G401 (cell line): ENCODE measurements at regions of chr2 and their contacts with region 1.

Region 1: DNA sequence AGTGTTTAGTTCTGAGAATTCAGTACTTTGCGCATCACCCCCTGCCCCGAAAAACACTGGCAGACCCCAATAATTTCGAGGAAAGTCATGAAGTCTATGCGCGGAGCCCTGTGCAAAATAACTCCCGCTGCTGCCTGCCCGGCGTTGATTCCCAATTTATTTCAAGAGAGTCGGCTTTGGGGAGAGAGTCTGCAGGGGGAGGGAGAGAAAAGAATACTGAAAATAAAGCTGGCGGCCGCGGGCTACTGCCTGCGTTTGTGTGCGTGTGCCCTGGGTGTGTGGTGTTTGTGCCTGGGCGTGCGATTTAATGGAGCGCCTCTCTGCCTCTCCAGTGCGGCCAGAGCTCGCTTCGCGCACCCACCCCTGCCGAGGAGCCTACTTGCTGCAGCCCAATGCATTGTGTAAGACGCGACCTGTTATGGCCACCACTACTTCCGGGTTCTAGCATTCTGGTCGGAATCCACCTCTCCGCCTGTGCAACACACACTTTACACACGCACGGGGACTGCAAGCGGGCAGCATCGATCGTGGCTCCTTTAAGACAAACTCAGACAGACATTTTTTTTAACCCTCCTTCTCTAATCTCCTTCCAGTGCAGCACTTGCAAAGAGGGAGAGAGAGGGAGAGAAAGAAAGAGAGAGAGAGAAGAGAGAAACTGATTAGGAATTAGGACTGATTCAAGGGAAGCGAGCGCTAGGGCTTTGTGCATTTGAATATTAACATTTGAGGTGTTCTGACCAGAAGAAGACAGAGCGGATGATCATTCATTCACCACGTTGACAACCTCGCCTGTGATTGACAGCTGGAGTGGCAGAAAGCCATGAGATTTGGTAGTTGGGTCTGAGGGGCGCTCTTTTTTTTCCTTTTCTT is at the start of gene MEIS1:
- DNase-seq: peak; percentile 98
- total RNA-seq, gene MEIS1: 0.25 TPM in 1 of 2 replicates, not detected in the other

Region 2: GRCh38 chr2:66334237-66335054 is 100.5 kb before region 1 on chr2:
- in situ Hi-C with region 1: no loop called
- DNase-seq: no peak

Region 3: GRCh38 chr2:66495788-66496640 is 61.1 kb after region 1 on chr2:
- in situ Hi-C with region 1: loop called (anchors 10 kb)
- DNase-seq: peak; percentile 81